ENCODE measurements at regions of chr3 and their contacts with region 1.

Region 1: GRCh38 chr3:109806929-109807328 is 469.6 kb upstream of the DPPA4 start:
- DNase-seq: peak; percentile 44
- H3K4me3 Mint-ChIP-seq: no peak overlapping the region
- H3K27ac Mint-ChIP-seq: peak overlapping the region; percentile 62
- H3K4me1 Mint-ChIP-seq: peaks cover 34% of the 10 kb centered on the region
- H3K27me3 Mint-ChIP-seq: no peaks in the 10 kb centered on the region

Region 2: DNA sequence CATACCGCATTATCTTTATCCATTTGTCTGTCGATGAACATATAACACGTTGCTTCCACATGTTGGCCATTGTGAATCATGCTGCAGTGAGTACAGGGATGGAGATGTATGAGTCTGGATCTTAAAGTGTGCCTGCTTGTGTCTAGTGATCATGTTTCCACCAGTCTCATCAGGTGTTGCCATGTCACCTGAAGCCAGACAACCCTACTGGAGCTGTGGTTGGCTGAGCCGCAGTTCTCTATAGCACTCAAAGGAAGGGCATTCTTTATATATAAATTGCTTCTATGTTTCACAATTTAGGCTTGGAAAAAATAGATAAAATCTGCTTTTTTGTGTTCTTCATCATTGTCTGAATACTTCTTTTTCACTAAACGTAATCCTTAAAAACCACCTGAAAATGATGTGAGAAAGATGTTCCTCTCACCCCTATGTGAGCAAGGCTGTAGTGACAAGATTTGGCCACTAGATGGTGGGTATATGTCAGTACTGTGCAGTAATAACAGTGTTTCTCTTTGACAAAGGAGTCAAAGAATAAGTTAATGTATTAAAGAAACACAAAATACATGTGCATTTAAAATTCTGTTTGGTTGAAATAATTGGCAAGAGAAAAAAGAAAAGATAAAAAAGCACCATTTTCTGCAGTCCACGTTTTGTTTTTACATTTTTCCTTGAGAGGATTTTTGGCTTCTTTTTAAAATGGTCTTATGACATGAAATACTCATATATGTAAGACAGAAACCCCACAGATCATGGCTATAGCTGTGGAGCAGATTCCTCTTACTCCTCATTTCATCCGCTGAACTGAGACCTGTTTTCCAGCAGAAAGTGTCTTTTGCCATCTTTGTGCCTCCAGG is 75.1 kb before region 1 on chr3:
- CTCF ChIA-PET with region 1: no interaction called
- POLR2A ChIA-PET with region 1: no interaction called
- intact Hi-C with region 1: loop called (anchors 5 kb)
- DNase-seq: peak; percentile 44
- H3K4me3 Mint-ChIP-seq: no peak overlapping the region
- H3K27ac Mint-ChIP-seq: no peak overlapping the region
- H3K4me1 Mint-ChIP-seq: peaks cover 6% of the 10 kb centered on the region
- H3K27me3 Mint-ChIP-seq: no peaks in the 10 kb centered on the region

Region 3: GRCh38 chr3:109819734-109820133 is 12.8 kb after region 1 on chr3:
- CTCF ChIA-PET with region 1: no interaction called
- POLR2A ChIA-PET with region 1: no interaction called
- intact Hi-C with region 1: no loop called
- DNase-seq: no peak
- H3K4me3 Mint-ChIP-seq: no peak overlapping the region
- H3K27ac Mint-ChIP-seq: no peak overlapping the region
- H3K4me1 Mint-ChIP-seq: no peaks in the 10 kb centered on the region
- H3K27me3 Mint-ChIP-seq: no peaks in the 10 kb centered on the region

Region 4: GRCh38 chr3:109853077-109853731 is 46.3 kb after region 1 on chr3:
- CTCF ChIA-PET with region 1: no interaction called
- POLR2A ChIA-PET with region 1: no interaction called
- intact Hi-C with region 1: loop called (anchors 1 kb)
- DNase-seq: no peak
- H3K4me3 Mint-ChIP-seq: no peak overlapping the region
- H3K27ac Mint-ChIP-seq: no peak overlapping the region
- H3K4me1 Mint-ChIP-seq: peaks cover 10% of the 10 kb centered on the region
- H3K27me3 Mint-ChIP-seq: no peaks in the 10 kb centered on the region

Region 5: GRCh38 chr3:109927161-109927560 is 120.2 kb after region 1 on chr3:
- CTCF ChIA-PET with region 1: no interaction called
- POLR2A ChIA-PET with region 1: no interaction called
- intact Hi-C with region 1: loop called (anchors 1 kb)
- DNase-seq: peak; percentile 34
- H3K4me3 Mint-ChIP-seq: no peak overlapping the region
- H3K27ac Mint-ChIP-seq: no peak overlapping the region
- H3K4me1 Mint-ChIP-seq: peaks cover 5% of the 10 kb centered on the region
- H3K27me3 Mint-ChIP-seq: no peaks in the 10 kb centered on the region

Region 6: GRCh38 chr3:110016235-110016815 is 209.4 kb after region 1 on chr3:
- CTCF ChIA-PET with region 1: no interaction called
- POLR2A ChIA-PET with region 1: no interaction called
- intact Hi-C with region 1: loop called (anchors 2 kb)
- DNase-seq: no peak
- H3K4me3 Mint-ChIP-seq: no peak overlapping the region
- H3K27ac Mint-ChIP-seq: no peak overlapping the region
- H3K4me1 Mint-ChIP-seq: peaks cover 10% of the 10 kb centered on the region
- H3K27me3 Mint-ChIP-seq: no peaks in the 10 kb centered on the region

Region 7: DNA sequence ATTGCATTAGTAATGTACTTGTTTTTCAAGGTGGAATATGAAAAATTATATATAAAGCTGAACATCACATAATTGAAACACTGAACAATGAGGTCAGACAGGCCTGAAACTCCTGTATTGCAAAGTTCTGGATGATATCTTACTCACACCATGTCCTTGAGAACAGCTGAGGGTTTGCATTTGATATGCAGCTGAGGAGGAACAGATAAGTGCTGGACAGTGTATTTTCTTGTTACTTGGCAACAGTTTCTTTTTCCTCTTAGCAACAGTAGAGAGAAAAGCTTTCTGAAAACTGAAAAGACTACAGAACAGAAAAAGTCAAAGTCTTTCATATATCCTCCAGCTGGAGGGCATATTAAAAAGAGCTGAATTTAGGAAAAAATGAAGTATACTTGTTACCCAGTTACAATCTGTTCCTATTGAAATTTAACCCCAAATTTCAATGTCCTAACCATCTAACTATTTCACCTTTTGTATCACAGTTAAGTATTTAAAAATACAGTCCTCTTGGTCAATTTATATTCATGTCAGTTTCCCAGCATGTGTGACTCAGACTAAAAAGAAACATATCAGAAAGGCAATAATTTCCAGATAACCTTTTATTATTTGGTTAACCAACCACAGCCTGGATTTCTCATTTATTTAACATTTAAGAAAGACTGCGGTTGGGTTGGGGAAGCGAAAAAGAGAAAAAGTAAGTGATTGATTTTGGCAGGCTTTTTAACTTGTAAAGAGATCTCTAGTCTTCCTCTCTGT is 263.4 kb after region 1 on chr3:
- CTCF ChIA-PET with region 1: no interaction called
- POLR2A ChIA-PET with region 1: no interaction called
- intact Hi-C with region 1: loop called (anchors 1 kb)
- DNase-seq: no peak
- H3K4me3 Mint-ChIP-seq: no peak overlapping the region
- H3K27ac Mint-ChIP-seq: peak overlapping the region; percentile 6
- H3K4me1 Mint-ChIP-seq: peaks cover 16% of the 10 kb centered on the region
- H3K27me3 Mint-ChIP-seq: no peaks in the 10 kb centered on the region

Region 8: DNA sequence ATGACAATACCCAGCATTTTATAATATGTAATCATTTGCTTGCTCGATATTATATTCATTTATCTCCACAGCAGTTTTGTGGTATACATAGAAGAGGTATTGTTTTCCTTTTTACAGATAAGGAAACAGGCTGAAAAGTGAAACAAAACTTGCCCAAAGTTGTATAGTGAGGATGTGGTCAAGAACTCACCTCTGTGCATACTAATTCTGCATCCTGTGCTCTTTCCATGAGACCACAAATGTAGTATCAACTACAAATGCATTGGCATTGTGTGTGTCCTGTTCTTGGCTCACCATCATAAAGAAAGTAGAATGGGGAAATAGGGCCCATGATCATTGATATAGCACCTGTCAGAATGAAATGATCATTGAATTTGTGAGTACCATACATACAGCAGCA is 1432.0 kb after region 1 on chr3:
- CTCF ChIA-PET with region 1: no interaction called
- POLR2A ChIA-PET with region 1: no interaction called
- intact Hi-C with region 1: loop called (anchors 10 kb)
- DNase-seq: no peak
- H3K4me3 Mint-ChIP-seq: no peak overlapping the region
- H3K27ac Mint-ChIP-seq: no peak overlapping the region
- H3K4me1 Mint-ChIP-seq: peaks cover 22% of the 10 kb centered on the region
- H3K27me3 Mint-ChIP-seq: no peaks in the 10 kb centered on the region

Measured in activated CD4-positive, alpha-beta memory T cell treated with anti-CD3 and anti-CD28 coated beads for 36 hours (primary cell).